ENCODE measurements at regions of chr10 and their contacts with region 1.

Region 1: GRCh38 chr10:60208676-60209269 is 180.9 kb downstream of the ANK3 start:
- DNase-seq: peak; percentile 55
- H3K4me3 ChIP-seq: no peak overlapping the region
- H3K27ac ChIP-seq: no peak overlapping the region
- H3K4me1 ChIP-seq: peaks cover 8% of the 10 kb centered on the region
- H3K27me3 ChIP-seq: no peaks in the 10 kb centered on the region
- CTCF ChIP-seq: peak; percentile 53 to 56
- POLR2A ChIP-seq: no peak

Region 2: GRCh38 chr10:59625721-59626522 is 582.9 kb before region 1 on chr10:
- CTCF ChIA-PET with region 1: interaction called, 10 read pairs
- POLR2A ChIA-PET with region 1: no interaction called
- dilution Hi-C with region 1: no loop called
- intact Hi-C with region 1: loop called (anchors 2 kb)
- DNase-seq: peak; percentile 67
- H3K4me3 ChIP-seq: no peak overlapping the region
- H3K27ac ChIP-seq: no peak overlapping the region
- H3K4me1 ChIP-seq: no peaks in the 10 kb centered on the region
- H3K27me3 ChIP-seq: peaks cover 4 to 7% of the 10 kb centered on the region in 2 experiments
- CTCF ChIP-seq: peak; percentile 68 to 69
- POLR2A ChIP-seq: no peak

Region 3: DNA sequence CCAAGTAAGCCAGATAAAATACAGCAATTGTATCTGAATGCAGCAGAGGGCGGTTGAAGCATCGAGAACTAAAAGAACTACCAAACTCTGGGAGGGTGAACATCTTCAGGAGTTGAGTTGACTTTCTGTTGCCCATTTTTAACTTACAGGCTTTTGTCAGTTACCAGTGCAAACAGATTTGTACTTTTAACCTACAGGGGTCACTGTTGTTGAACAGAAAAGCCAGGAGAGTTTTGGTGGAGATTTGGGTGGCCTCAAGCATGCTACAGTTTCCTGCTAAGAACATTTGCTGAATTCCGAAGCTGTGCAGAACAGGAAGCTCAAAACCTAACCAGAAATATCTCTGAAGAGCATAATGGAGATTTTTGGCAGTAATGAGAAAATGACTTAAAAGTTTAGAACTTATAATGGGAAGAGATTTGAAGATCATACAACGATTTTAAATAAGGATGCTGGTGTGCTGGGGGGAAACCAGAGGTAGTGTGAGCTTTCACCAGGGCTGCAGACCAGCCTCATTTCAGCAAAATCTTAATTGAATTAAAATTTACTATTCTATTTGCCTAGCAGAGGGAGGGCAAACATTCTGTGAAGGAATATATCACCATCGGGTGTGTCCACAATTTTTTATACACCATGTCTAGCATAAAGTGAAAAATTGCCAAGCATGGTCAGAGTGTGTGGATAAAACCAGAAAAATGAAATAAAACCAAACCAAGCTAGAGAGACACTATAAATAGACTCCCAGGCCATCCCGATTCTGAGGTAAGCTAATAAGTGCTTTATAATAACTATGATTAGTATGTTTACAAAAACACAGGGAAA is 93.8 kb before region 1 on chr10:
- CTCF ChIA-PET with region 1: interaction called, 128 read pairs
- POLR2A ChIA-PET with region 1: no interaction called
- dilution Hi-C with region 1: no loop called
- intact Hi-C with region 1: loop called (anchors 1 kb)
- DNase-seq: peak; percentile 69
- H3K4me3 ChIP-seq: no peak overlapping the region
- H3K27ac ChIP-seq: no peak overlapping the region
- H3K4me1 ChIP-seq: no peaks in the 10 kb centered on the region
- H3K27me3 ChIP-seq: no peaks in the 10 kb centered on the region
- CTCF ChIP-seq: peak; percentile 49 to 55
- POLR2A ChIP-seq: no peak

Region 4: DNA sequence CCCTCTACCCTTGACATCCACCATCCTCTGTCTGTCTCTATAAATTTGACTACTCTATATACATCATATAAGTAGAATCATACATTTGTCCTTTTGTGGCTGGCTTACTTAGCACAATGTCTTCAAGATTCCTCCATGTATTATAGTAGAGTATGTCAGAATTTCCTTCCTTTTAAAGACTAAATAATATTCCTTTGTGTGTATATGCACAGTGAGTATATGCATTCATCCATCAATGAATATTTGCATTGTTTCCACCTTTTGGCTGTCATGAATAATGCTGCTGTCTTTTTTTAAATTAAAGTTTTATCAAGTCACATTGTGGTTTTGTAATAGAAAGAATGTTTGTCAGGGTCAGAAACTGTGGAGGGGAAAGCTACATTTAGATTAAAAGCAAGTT is 14.4 kb before region 1 on chr10:
- CTCF ChIA-PET with region 1: interaction called, 17 read pairs
- POLR2A ChIA-PET with region 1: interaction called, 11 read pairs
- dilution Hi-C with region 1: no loop called
- intact Hi-C with region 1: no loop called
- DNase-seq: no peak
- H3K4me3 ChIP-seq: no peak overlapping the region
- H3K27ac ChIP-seq: no peak overlapping the region
- H3K4me1 ChIP-seq: no peaks in the 10 kb centered on the region
- H3K27me3 ChIP-seq: no peaks in the 10 kb centered on the region
- CTCF ChIP-seq: no peak
- POLR2A ChIP-seq: no peak

Region 5: DNA sequence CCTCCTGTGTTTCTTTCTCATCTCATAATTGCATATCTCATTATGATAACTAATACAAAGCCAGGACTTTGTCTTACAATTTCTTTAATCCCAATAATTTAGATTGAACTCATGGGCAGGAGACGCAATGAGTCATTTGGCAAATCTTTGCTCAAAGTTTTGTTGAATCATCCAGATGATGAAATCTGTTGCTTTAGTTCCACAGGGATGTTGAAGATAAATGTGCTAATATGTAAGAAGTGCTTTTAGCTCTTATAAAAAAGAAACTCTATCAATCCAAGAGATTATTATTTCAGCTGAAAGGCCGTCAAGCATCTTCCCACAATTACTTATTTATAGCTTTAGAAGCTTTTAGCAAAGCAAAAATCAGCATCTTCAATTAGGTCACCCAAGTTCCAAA is 217.6 kb after region 1 on chr10:
- CTCF ChIA-PET with region 1: interaction called, 12 read pairs
- POLR2A ChIA-PET with region 1: no interaction called
- dilution Hi-C with region 1: no loop called
- intact Hi-C with region 1: no loop called
- DNase-seq: peak; percentile 71
- H3K4me3 ChIP-seq: no peak overlapping the region
- H3K27ac ChIP-seq: peak overlapping the region; percentile 85
- H3K4me1 ChIP-seq: peaks cover 62% of the 10 kb centered on the region
- H3K27me3 ChIP-seq: no peaks in the 10 kb centered on the region
- CTCF ChIP-seq: no peak
- POLR2A ChIP-seq: no peak

Region 6: GRCh38 chr10:60646966-60647796 is 438.4 kb after region 1 on chr10:
- CTCF ChIA-PET with region 1: interaction called, 6 read pairs
- POLR2A ChIA-PET with region 1: no interaction called
- dilution Hi-C with region 1: no loop called
- intact Hi-C with region 1: loop called (anchors 5 kb)
- DNase-seq: peak; percentile 65
- H3K4me3 ChIP-seq: no peak overlapping the region
- H3K27ac ChIP-seq: no peak overlapping the region
- H3K4me1 ChIP-seq: no peaks in the 10 kb centered on the region
- H3K27me3 ChIP-seq: no peaks in the 10 kb centered on the region
- CTCF ChIP-seq: peak; percentile 34 to 43
- POLR2A ChIP-seq: no peak

Measured in endothelial cell of umbilical vein (primary cell).